GM12878 (cell line): ENCODE measurements at regions of chr6 and their contacts with region 1.

Region 1: DNA sequence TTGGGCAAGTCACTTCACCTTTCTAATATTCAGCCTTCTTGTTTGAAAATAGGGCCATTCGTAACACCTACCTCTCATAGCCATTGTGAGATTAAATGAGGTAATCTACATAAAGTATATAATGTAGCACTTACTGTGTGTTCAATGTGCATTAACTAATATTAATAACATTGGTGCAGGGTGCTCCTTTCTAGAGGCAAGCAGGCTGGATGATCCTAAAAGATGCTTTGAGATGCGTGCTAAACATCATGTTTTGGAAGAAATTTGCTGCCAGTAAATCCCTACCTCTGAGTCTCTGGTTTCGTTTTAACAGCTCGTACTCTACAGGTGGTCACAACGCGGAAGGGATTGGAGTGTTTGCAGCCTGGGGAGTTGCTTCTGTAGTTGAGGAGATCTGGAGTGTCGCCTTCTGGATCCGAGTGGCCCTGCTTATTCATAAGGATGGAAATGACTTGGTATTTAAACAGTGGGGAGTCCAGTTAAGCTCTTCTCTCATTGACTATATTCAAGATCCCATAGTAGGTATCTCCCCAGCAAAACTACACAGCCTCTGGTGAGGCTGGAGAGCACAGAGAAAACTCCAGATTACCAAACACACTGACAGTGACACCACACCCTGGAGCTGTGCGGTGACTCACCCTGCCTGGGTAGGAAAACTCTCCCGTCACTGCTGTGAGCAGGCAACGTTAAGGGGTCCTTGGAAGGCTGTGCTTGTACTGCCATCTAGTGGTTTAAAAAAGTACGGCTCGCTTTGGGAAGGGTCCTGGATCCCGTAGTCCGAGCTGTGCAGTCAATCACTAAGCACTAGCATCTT is 107.9 kb downstream of the MAP3K7 start:
- DNase-seq: peak; percentile 41
- ATAC-seq: peak; percentile 96
- H3K4me3 ChIP-seq: 0 out of 2 replicates have a peak overlapping the region, but pooled peaks have one; percentile 15
- H3K27ac ChIP-seq: no peak overlapping the region
- H3K4me1 ChIP-seq: peaks cover 4% of the 10 kb centered on the region
- H3K27me3 ChIP-seq: peaks cover 0 to 4% of the 10 kb centered on the region in 2 experiments; a peak in 1 of 4 replicates
- CTCF ChIP-seq: peak; percentile 72 to 95 (median 80); a peak in 5 of 6 replicates
- EP300 ChIP-seq: no peak
- POLR2A ChIP-seq: no peak
- RAD21 ChIP-seq: peak; percentile 99

Region 2: DNA sequence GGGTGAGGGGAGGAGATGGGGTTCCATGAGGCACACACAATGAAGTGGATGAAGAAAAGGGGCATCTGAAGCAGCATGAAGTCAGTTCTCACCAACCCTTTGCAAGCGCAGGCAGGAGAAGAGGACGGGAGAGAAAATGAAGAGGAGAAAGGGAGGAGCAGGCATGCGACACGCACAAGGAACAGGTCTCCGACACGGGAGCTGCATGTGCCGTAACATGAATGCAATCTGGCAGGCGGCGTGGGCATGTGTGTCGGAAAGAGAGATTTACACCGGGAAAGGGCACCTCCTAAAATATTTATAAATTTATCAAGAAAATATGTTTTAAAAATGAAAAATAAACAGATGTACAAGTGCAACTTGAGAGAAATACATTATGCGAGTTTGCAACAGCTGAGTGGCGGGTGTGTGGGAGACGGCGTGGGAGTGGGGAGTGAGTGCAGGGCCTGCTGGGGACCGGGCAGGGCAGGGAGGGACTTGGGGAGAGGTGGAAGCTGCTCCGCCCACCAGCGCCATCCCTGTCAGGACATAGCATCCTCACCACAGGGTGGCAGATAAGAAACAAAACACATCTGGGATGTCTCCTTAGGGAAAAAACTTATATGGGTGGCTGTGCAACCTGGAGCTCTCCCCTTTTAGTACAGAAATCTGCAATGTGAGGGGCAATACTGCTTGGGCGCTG is 544.2 kb before region 1 on chr6:
- CTCF ChIA-PET with region 1: interaction called, 193 read pairs
- POLR2A ChIA-PET with region 1: no interaction called
- RAD21 ChIA-PET with region 1: interaction called, 104 read pairs
- SMC1A ChIA-PET with region 1: interaction called, 97 read pairs
- in situ Hi-C with region 1: loop called (anchors 5 kb)
- intact Hi-C with region 1: loop called (anchors 1 kb)
- DNase-seq: no peak
- ATAC-seq: no peak
- H3K4me3 ChIP-seq: no peak overlapping the region
- H3K27ac ChIP-seq: no peak overlapping the region
- H3K4me1 ChIP-seq: no peaks in the 10 kb centered on the region
- H3K27me3 ChIP-seq: peaks cover 0 to 2% of the 10 kb centered on the region in 2 experiments; a peak in 3 of 4 replicates
- CTCF ChIP-seq: no peak
- EP300 ChIP-seq: no peak
- POLR2A ChIP-seq: no peak
- RAD21 ChIP-seq: no peak

Region 3: GRCh38 chr6:89970609-89971337 is 508.2 kb before region 1 on chr6:
- CTCF ChIA-PET with region 1: interaction called, 6 read pairs
- POLR2A ChIA-PET with region 1: no interaction called
- RAD21 ChIA-PET with region 1: interaction called, 4 read pairs
- SMC1A ChIA-PET with region 1: interaction called, 3 read pairs
- in situ Hi-C with region 1: no loop called
- intact Hi-C with region 1: loop called (anchors 1 kb)
- DNase-seq: no peak
- ATAC-seq: peak; percentile 52
- H3K4me3 ChIP-seq: no peak overlapping the region
- H3K27ac ChIP-seq: no peak overlapping the region
- H3K4me1 ChIP-seq: no peaks in the 10 kb centered on the region
- H3K27me3 ChIP-seq: peaks cover 0 to 1% of the 10 kb centered on the region in 2 experiments
- CTCF ChIP-seq: peak; percentile 22 to 52 (median 22); a peak in 4 of 6 replicates
- EP300 ChIP-seq: no peak
- POLR2A ChIP-seq: no peak
- RAD21 ChIP-seq: peak; percentile 59

Region 4: GRCh38 chr6:90184334-90185298 is 294.4 kb before region 1 on chr6:
- CTCF ChIA-PET with region 1: no interaction called
- POLR2A ChIA-PET with region 1: no interaction called
- RAD21 ChIA-PET with region 1: interaction called, 3 read pairs
- SMC1A ChIA-PET with region 1: interaction called, 3 read pairs
- in situ Hi-C with region 1: no loop called
- intact Hi-C with region 1: loop called (anchors 5 kb)
- DNase-seq: no peak
- ATAC-seq: no peak
- H3K4me3 ChIP-seq: no peak overlapping the region
- H3K27ac ChIP-seq: no peak overlapping the region
- H3K4me1 ChIP-seq: no peaks in the 10 kb centered on the region
- H3K27me3 ChIP-seq: peaks cover 2 to 14% of the 10 kb centered on the region in 2 experiments; a peak in 3 of 4 replicates
- CTCF ChIP-seq: no peak
- EP300 ChIP-seq: no peak
- POLR2A ChIP-seq: no peak
- RAD21 ChIP-seq: no peak

Region 5: DNA sequence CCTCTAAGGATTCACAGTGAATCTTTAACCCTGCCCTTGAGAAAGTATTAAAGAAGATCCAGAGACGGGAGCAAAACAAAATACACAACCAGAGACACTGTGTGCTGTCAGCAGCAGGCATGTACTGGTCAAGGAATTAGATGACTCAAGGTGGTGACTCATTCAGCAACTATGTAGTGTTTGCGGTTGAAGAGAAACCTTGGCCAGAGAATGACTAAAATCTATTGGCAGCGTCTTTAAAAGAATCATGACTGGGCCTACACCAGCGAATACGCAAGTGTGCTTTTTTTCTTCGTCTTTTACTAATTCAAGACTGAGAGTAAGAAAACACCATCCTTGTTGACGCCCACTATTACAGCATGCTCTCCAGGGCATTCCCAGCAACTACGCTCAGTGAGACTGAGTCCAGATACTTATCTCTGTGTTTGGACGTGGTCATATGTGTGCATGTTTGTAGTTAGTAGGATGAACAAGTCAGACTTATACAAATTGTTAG is 109.9 kb before region 1 on chr6:
- CTCF ChIA-PET with region 1: no interaction called
- POLR2A ChIA-PET with region 1: no interaction called
- RAD21 ChIA-PET with region 1: interaction called, 3 read pairs
- SMC1A ChIA-PET with region 1: interaction called, 3 read pairs
- in situ Hi-C with region 1: no loop called
- intact Hi-C with region 1: loop called (anchors 1 kb)
- DNase-seq: peak; percentile 90
- ATAC-seq: peak; percentile 99
- H3K4me3 ChIP-seq: no peak overlapping the region
- H3K27ac ChIP-seq: no peak overlapping the region
- H3K4me1 ChIP-seq: peaks cover 13% of the 10 kb centered on the region
- H3K27me3 ChIP-seq: peaks cover 0 to 3% of the 10 kb centered on the region in 2 experiments; a peak in 2 of 4 replicates
- CTCF ChIP-seq: no peak
- EP300 ChIP-seq: peak; percentile 87 to 94
- POLR2A ChIP-seq: no peak
- RAD21 ChIP-seq: no peak

Region 6: GRCh38 chr6:90457867-90458259 is 21.1 kb before region 1 on chr6:
- CTCF ChIA-PET with region 1: interaction called, 4 read pairs
- POLR2A ChIA-PET with region 1: no interaction called
- RAD21 ChIA-PET with region 1: interaction called, 3 read pairs
- SMC1A ChIA-PET with region 1: interaction called, 10 read pairs
- in situ Hi-C with region 1: no loop called
- intact Hi-C with region 1: no loop called
- DNase-seq: no peak
- ATAC-seq: no peak
- H3K4me3 ChIP-seq: no peak overlapping the region
- H3K27ac ChIP-seq: no peak overlapping the region
- H3K4me1 ChIP-seq: no peaks in the 10 kb centered on the region
- H3K27me3 ChIP-seq: peaks cover 1 to 7% of the 10 kb centered on the region in 2 experiments; a peak in 3 of 4 replicates
- CTCF ChIP-seq: no peak
- EP300 ChIP-seq: no peak
- POLR2A ChIP-seq: no peak
- RAD21 ChIP-seq: no peak